ENCODE measurements at regions of chr20 and their contacts with region 1.

Region 1: DNA sequence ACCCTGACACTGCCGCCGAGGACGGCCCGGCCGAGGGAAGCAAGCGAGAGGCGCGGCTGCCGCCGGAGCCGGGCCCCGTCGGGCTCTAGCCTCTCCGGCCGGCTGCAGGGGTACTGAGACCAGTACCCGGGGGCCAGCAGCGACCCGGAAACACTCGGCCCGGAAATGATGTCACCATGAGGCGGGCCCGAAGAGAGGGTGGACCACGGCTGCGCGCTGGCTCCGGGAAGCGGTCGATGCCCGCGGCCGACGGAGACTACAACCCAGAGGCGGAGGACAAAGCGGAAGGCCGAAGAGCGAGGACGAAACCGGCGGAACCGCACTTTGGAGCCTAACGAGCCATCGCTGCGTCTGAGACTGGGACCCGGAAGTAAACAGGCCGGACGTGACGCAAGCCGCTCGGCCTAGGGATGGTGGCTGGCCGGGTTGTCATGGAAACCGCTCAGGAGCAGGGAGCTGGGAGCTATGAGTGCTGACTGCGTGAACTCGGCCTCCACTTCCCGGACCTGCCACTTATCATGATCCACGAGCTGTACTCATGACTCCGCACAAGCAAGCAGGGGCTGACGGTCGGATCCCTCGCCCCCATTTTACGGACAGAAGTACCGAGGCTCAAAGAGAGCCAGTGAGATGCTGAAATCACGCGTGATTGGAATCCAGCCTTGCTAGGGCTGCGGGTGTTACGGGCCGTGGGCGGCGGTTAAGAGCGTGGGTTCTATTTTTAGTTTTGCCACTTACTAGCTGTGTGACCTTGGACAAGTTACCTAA is at the start of gene SPATA2:
- DNase-seq: peak; percentile 96 to 97
- H3K4me3 ChIP-seq: peak within 1 kb of the TSS; percentile 95 to 97 (median 95)
- H3K27ac ChIP-seq: peak within 1 kb of the TSS; percentile 98 to 100 (median 100)
- H3K4me1 ChIP-seq: peaks cover 33 to 36% of the 10 kb centered on the region in 2 donors
- H3K27me3 ChIP-seq: no peaks in the 10 kb centered on the region
- CTCF ChIP-seq: no peak
- POLR2A ChIP-seq: peak in 1 of 2 donors; percentile 86
- total RNA-seq, gene SPATA2: 5.0 to 14.2 (median 12.7) TPM

Region 2: GRCh38 chr20:49853640-49854039 is 61.9 kb before region 1 on chr20:
- intact Hi-C with region 1: loop called (anchors 10 kb)
- DNase-seq: peak; percentile 79 to 81
- H3K4me3 ChIP-seq: no peak overlapping the region
- H3K27ac ChIP-seq: peak overlapping the region in 2 of 3 donors; percentile 36 to 40
- H3K4me1 ChIP-seq: peaks cover 6 to 29% of the 10 kb centered on the region in 2 donors
- H3K27me3 ChIP-seq: no peaks in the 10 kb centered on the region
- CTCF ChIP-seq: no peak
- POLR2A ChIP-seq: no peak